Activated naive CD4-positive, alpha-beta T cell treated with anti-CD3 and anti-CD28 coated beads for 36 hours (primary cell): ENCODE measurements at regions of chr7 and their contacts with region 1.

Region 1: GRCh38 chr7:28142650-28143049 is 37.9 kb downstream of the JAZF1 start:
- DNase-seq: peak; percentile 25
- H3K4me3 Mint-ChIP-seq: no peak overlapping the region
- H3K27ac Mint-ChIP-seq: no peak overlapping the region
- H3K4me1 Mint-ChIP-seq: peaks cover 9% of the 10 kb centered on the region
- H3K27me3 Mint-ChIP-seq: no peaks in the 10 kb centered on the region

Region 2: GRCh38 chr7:27952456-27953285 is 190.0 kb before region 1 on chr7:
- CTCF ChIA-PET with region 1: no interaction called
- intact Hi-C with region 1: no loop called
- DNase-seq: no peak
- H3K4me3 Mint-ChIP-seq: no peak overlapping the region
- H3K27ac Mint-ChIP-seq: no peak overlapping the region
- H3K4me1 Mint-ChIP-seq: peaks cover 29% of the 10 kb centered on the region
- H3K27me3 Mint-ChIP-seq: no peaks in the 10 kb centered on the region

Region 3: DNA sequence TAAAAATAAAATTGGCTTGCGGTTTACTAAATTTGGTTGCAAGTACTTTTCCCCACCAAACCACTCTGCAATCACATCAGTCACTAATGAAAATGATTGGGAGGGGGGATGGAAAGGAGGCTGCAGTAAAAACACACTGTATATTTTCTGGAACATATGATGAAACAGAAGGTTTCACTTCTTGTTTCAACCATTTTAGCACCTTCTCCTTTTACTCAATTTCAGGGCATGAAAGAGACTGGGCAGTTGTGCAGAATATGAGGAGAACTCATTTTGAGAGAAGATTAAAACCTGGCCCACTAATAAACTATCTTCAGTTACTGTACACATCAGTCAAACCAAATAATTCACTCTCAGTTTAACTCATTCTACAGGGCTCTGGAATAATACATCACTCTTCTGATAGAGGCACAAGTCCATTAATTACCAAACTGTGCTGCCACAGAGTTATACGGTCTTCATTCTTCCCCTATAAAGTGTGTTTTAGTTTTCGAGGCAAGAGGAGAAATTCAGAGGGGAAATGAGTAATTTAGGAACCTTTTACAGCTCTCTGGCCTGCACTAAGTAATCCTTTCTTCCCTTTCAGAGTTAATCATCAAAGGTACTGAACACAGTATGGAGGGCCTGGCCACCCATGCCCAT is 12.5 kb after region 1 on chr7:
- CTCF ChIA-PET with region 1: no interaction called
- intact Hi-C with region 1: no loop called
- DNase-seq: no peak
- H3K4me3 Mint-ChIP-seq: no peak overlapping the region
- H3K27ac Mint-ChIP-seq: peak overlapping the region; percentile 36
- H3K4me1 Mint-ChIP-seq: peaks cover 45% of the 10 kb centered on the region
- H3K27me3 Mint-ChIP-seq: no peaks in the 10 kb centered on the region

Region 4: DNA sequence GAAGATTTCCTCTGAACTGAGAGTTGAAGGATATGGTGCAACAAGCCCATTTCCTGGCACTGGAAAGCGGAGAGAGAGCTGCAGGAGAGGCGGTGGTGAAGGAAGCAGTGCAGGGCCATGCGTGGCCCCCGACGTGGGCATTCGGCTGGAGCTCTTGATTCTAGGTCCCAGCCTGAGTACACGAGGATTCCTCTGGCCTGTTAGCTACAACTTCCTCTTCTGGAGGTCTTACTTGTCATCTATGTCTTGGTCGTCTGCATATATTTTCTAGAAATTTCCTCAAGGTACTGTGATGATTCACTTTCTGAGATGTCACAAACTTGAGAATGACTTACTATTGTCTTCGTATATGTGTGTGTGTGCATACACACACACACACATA is 97.2 kb after region 1 on chr7:
- CTCF ChIA-PET with region 1: no interaction called
- intact Hi-C with region 1: no loop called
- DNase-seq: peak; percentile 6
- H3K4me3 Mint-ChIP-seq: no peak overlapping the region
- H3K27ac Mint-ChIP-seq: no peak overlapping the region
- H3K4me1 Mint-ChIP-seq: peaks cover 9% of the 10 kb centered on the region
- H3K27me3 Mint-ChIP-seq: peaks cover 48% of the 10 kb centered on the region

Region 5: GRCh38 chr7:28272461-28272877 is 129.8 kb after region 1 on chr7:
- CTCF ChIA-PET with region 1: interaction called, 3 read pairs
- intact Hi-C with region 1: loop called (anchors 1 kb)
- DNase-seq: peak; percentile 58
- H3K4me3 Mint-ChIP-seq: no peak overlapping the region
- H3K27ac Mint-ChIP-seq: no peak overlapping the region
- H3K4me1 Mint-ChIP-seq: peaks cover 9% of the 10 kb centered on the region
- H3K27me3 Mint-ChIP-seq: peaks cover 38% of the 10 kb centered on the region

Region 6: DNA sequence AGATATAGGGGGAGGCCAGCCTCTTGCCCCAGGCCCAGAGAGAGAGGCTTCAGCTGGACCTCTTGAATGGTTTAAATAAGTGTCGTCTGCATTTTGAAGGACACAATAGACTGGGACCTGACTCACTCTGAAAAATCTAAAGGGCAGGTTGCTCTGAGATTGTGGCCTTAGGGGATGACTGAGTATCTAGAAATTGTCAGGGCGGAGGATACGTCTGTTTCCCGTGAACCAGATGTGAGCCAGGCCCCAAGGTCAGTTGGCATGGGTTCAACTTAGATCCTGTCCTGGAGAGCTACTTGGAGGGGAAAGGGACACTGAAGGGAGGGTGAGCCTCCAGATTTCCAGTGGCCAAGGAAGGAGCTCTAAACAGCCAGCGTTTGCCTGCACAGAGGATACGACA is 1162.1 kb after region 1 on chr7:
- CTCF ChIA-PET with region 1: no interaction called
- intact Hi-C with region 1: no loop called
- DNase-seq: no peak
- H3K4me3 Mint-ChIP-seq: no peak overlapping the region
- H3K27ac Mint-ChIP-seq: no peak overlapping the region
- H3K4me1 Mint-ChIP-seq: no peaks in the 10 kb centered on the region
- H3K27me3 Mint-ChIP-seq: peaks cover 2% of the 10 kb centered on the region